ENCODE measurements at regions of chr20 and their contacts with region 1.

Region 1: GRCh38 chr20:17431621-17432364 is 99.4 kb downstream of the BFSP1 start:
- DNase-seq: peak; percentile 56 to 63
- ATAC-seq: peak in 1 of 2 experiments; percentile 83; a peak in 3 of 6 replicates
- H3K4me3 ChIP-seq: no peak overlapping the region
- H3K27ac ChIP-seq: no peak overlapping the region
- H3K4me1 ChIP-seq: no peaks in the 10 kb centered on the region
- CTCF ChIP-seq: peak; percentile 97
- EP300 ChIP-seq: no peak
- POLR2A ChIP-seq: no peak
- RAD21 ChIP-seq: peak; percentile 83 to 86

Region 2: GRCh38 chr20:16801919-16802911 is 629.6 kb before region 1 on chr20:
- CTCF ChIA-PET with region 1: interaction called, 361 read pairs
- POLR2A ChIA-PET with region 1: no interaction called
- DNase-seq: peak; percentile 41 to 69
- ATAC-seq: peak; percentile 54 to 85; a peak in 4 of 6 replicates
- H3K4me3 ChIP-seq: peak overlapping the region; percentile 23; the same call in 2 of the 3 replicates
- H3K27ac ChIP-seq: no peak overlapping the region
- H3K4me1 ChIP-seq: peaks cover 5% of the 10 kb centered on the region; the same call in 2 of the 3 replicates
- CTCF ChIP-seq: peak; percentile 91
- EP300 ChIP-seq: no peak
- POLR2A ChIP-seq: no peak
- RAD21 ChIP-seq: peak; percentile 82 to 84

Region 3: GRCh38 chr20:16810216-16810615 is 621.6 kb before region 1 on chr20:
- CTCF ChIA-PET with region 1: interaction called, 361 read pairs
- POLR2A ChIA-PET with region 1: no interaction called
- DNase-seq: no peak
- ATAC-seq: no peak
- H3K4me3 ChIP-seq: no peak overlapping the region
- H3K27ac ChIP-seq: no peak overlapping the region
- H3K4me1 ChIP-seq: no peaks in the 10 kb centered on the region
- CTCF ChIP-seq: no peak
- EP300 ChIP-seq: no peak
- POLR2A ChIP-seq: no peak
- RAD21 ChIP-seq: no peak

Region 4: DNA sequence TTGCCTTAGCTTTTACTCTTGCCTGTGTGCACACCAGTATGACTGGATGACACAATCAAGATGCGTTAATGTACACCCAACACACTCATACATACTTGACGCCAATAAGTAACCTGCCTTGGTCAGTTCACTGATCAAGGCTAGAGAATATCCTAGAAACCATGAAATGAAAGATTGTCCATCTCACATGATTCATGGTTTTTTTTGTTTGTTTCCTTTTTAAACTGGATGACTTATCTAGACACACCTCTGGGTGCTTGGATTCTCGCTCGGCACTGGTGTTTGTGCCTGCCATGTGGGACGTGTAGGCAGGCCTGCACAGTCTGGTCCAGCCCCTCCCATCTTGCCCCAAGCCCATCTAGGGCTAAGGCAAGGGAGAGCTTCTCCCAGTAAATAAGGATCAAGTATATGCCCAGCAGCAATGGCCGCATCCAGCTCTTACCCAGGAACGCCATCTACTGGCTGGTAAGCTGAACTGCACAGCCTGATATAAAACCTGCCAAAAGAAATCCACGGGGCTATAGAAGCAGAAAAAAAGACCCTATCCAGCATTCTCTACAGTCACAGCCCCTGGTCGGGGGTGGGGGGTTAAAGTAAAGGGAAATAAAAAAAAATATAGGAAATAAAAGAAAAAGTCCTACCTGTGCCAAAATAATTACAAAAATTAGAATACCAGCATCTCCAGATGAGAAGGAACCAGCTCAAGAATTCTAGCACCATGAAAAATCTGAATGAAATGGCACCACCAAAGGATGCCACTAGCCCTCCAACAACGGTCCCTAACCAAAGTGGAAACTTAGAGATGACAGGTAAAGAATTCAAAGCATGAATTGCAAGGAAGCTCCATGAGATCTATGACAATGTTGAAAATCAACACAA is 610.3 kb before region 1 on chr20:
- CTCF ChIA-PET with region 1: interaction called, 22 read pairs
- POLR2A ChIA-PET with region 1: no interaction called
- DNase-seq: peak; percentile 37 to 65
- ATAC-seq: peak; percentile 62 to 88
- H3K4me3 ChIP-seq: no peak overlapping the region
- H3K27ac ChIP-seq: no peak overlapping the region
- H3K4me1 ChIP-seq: no peaks in the 10 kb centered on the region
- CTCF ChIP-seq: peak; percentile 67
- EP300 ChIP-seq: no peak
- POLR2A ChIP-seq: no peak
- RAD21 ChIP-seq: peak; percentile 50 to 61; a peak in 4 of 5 replicates

Region 5: DNA sequence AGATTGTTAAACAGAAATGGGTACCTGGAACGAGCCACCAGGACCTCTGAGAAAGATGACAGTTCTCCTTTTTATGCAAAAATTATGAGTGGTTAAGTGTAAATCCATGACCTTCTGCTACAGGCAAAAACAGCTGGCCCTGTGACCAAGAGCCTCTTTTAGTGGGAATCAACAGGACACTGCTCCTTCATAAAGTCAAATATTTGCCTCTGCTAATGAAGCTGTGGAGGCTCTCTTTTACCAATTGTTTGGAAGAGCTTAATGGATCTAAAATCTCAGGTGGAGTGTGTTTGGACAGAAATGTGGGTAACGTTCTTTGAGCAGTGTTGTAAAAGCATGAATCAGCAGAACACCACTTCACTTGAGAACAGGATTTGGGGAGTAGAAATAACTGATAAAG is 322.5 kb before region 1 on chr20:
- CTCF ChIA-PET with region 1: no interaction called
- POLR2A ChIA-PET with region 1: no interaction called
- DNase-seq: no peak
- ATAC-seq: no peak
- H3K4me3 ChIP-seq: no peak overlapping the region
- H3K27ac ChIP-seq: no peak overlapping the region
- H3K4me1 ChIP-seq: no peaks in the 10 kb centered on the region
- CTCF ChIP-seq: no peak
- EP300 ChIP-seq: no peak
- POLR2A ChIP-seq: no peak
- RAD21 ChIP-seq: no peak

Region 6: DNA sequence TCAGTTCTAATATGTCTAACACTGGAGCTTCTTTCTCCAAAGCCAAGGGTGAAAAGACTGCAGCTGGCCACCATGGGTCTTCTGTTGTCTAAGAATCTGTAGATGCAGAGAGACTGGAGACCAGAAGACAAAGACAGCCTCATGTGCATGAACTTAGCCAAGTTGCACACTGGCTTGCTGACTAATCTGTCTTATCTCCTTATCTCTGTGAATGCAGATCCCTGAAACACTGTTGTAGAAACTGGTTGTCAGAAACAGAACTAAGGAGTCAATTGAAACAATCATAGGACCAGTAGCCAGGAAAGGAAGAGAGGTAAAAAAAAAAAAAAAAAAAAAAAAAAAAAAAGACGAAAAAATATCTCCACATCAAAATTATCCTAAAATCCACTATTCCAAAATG is 10.3 kb before region 1 on chr20:
- CTCF ChIA-PET with region 1: interaction called, 80 read pairs
- POLR2A ChIA-PET with region 1: no interaction called
- DNase-seq: no peak
- ATAC-seq: no peak
- H3K4me3 ChIP-seq: no peak overlapping the region
- H3K27ac ChIP-seq: no peak overlapping the region
- H3K4me1 ChIP-seq: no peaks in the 10 kb centered on the region
- CTCF ChIP-seq: no peak
- EP300 ChIP-seq: no peak
- POLR2A ChIP-seq: no peak
- RAD21 ChIP-seq: no peak

Region 7: DNA sequence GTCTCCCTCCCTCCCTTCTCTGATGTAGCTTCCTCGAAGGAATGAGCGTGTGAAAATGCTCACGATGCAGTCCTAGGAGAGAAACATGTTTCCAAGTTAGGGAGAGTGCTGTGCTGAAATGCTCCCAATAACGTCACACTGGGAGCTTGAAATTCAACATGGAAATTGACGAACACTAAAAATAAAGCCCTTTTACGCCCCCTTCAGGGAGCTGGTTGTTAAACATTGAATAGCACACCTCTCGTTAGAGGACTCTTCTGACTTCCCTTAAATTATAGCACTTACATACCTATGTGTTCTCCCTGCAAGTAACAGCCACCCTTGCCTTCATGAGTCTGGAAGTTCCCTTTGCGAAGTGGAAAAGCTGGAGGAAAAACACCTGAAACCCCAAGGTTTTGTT is 10.8 kb after region 1 on chr20:
- CTCF ChIA-PET with region 1: interaction called, 15 read pairs
- POLR2A ChIA-PET with region 1: no interaction called
- DNase-seq: peak in 1 of 2 experiments; percentile 28
- ATAC-seq: peak in 1 of 2 experiments; percentile 29; a peak in 1 of 6 replicates
- H3K4me3 ChIP-seq: no peak overlapping the region
- H3K27ac ChIP-seq: no peak overlapping the region
- H3K4me1 ChIP-seq: no peaks in the 10 kb centered on the region
- CTCF ChIP-seq: no peak
- EP300 ChIP-seq: no peak
- POLR2A ChIP-seq: no peak
- RAD21 ChIP-seq: peak in 1 of 2 experiments; percentile 24; a peak in 2 of 5 replicates

Region 8: GRCh38 chr20:17457588-17458190 is 25.9 kb after region 1 on chr20:
- CTCF ChIA-PET with region 1: interaction called, 10 read pairs
- POLR2A ChIA-PET with region 1: no interaction called
- DNase-seq: no peak
- ATAC-seq: no peak
- H3K4me3 ChIP-seq: no peak overlapping the region
- H3K27ac ChIP-seq: no peak overlapping the region
- H3K4me1 ChIP-seq: no peaks in the 10 kb centered on the region
- CTCF ChIP-seq: no peak
- EP300 ChIP-seq: no peak
- POLR2A ChIP-seq: no peak
- RAD21 ChIP-seq: no peak

Region 9: DNA sequence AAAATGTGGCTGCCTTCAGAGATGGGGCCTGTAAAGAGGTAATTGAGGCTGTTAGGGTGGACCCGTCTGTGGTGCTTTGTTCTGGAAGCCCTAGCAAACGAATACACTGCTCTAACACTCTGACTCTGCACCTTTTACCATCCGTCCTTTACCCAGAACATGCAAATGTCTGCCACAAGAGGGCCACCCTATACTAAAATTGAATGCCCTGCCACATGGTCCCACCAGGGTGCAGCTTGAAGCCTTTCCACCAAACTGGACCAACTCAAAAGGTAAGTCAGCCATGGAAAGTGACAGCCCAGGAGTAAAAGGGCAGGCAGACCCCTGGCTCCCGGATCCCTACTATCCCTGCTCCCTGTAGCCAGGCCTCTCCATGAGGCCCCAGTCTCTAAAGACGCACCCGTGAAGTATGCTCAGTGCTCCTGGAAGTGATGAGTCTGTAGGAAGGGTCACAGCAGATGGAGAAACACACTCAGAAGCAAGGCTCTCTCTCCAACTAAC is 105.2 kb after region 1 on chr20:
- CTCF ChIA-PET with region 1: no interaction called
- POLR2A ChIA-PET with region 1: no interaction called
- DNase-seq: peak; percentile 90 to 97
- ATAC-seq: peak; percentile 98
- H3K4me3 ChIP-seq: no peak overlapping the region
- H3K27ac ChIP-seq: peak overlapping the region; percentile 60 to 80
- H3K4me1 ChIP-seq: peaks cover 41% of the 10 kb centered on the region
- CTCF ChIP-seq: peak; percentile 99
- EP300 ChIP-seq: no peak
- POLR2A ChIP-seq: no peak
- RAD21 ChIP-seq: peak; percentile 100

Measured in A549 (cell line).